ENCODE measurements at regions of chr12 and their contacts with region 1.

Region 1: DNA sequence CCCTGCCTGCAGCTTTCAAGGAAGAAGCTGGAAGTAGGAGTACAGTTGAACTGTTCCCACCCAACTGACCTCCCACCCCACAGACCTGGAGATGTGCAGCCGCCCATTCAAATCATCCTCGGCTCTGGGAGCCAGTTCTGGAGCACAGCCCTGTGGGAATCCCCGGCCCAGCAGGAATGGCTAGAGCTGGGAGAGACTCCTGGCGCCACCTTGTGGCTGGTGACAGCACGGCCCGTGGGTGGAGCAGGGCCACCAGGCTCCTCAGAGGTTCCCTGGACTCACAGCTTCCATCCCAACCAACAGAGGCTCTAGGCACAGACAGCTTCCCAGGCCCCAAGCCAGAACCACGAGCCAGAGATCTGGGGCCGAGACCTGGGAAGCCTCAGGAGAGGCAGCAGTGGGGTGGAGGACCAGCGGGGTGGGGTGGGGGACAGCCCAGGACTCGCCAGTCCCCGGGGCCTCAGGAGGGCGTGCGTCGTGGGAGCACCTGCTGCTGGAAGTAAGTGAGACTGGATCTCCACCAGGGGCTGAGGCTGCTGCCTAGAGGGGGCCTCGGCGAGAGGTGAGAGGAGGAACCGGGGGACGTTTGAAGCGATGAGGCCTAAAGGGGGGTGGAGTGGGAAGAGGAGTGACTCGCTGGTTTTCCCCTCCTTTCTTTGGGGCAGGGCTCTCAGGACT is 43.4 kb downstream of the RNF34 start:
- DNase-seq: no peak
- H3K4me3 ChIP-seq: no peak overlapping the region
- CTCF ChIP-seq: peak; percentile 98

Region 2: GRCh38 chr12:121015825-121016766 is 427.2 kb before region 1 on chr12 and contains the start of gene C12orf43:
- CTCF ChIA-PET with region 1: no interaction called
- POLR2A ChIA-PET with region 1: no interaction called
- DNase-seq: peak; percentile 26
- H3K4me3 ChIP-seq: peak within 1 kb of the TSS; percentile 98
- CTCF ChIP-seq: no peak

Region 3: GRCh38 chr12:121351820-121352681 is 91.3 kb before region 1 on chr12 and contains the start of gene ANAPC5:
- CTCF ChIA-PET with region 1: interaction called, 24 read pairs
- POLR2A ChIA-PET with region 1: no interaction called
- DNase-seq: peak; percentile 96
- H3K4me3 ChIP-seq: peak within 1 kb of the TSS; percentile 98
- CTCF ChIP-seq: no peak

Region 4: GRCh38 chr12:121417847-121418246 is 25.5 kb before region 1 on chr12:
- CTCF ChIA-PET with region 1: interaction called, 75 read pairs
- POLR2A ChIA-PET with region 1: no interaction called
- DNase-seq: no peak
- H3K4me3 ChIP-seq: no peak overlapping the region
- CTCF ChIP-seq: no peak

Region 5: DNA sequence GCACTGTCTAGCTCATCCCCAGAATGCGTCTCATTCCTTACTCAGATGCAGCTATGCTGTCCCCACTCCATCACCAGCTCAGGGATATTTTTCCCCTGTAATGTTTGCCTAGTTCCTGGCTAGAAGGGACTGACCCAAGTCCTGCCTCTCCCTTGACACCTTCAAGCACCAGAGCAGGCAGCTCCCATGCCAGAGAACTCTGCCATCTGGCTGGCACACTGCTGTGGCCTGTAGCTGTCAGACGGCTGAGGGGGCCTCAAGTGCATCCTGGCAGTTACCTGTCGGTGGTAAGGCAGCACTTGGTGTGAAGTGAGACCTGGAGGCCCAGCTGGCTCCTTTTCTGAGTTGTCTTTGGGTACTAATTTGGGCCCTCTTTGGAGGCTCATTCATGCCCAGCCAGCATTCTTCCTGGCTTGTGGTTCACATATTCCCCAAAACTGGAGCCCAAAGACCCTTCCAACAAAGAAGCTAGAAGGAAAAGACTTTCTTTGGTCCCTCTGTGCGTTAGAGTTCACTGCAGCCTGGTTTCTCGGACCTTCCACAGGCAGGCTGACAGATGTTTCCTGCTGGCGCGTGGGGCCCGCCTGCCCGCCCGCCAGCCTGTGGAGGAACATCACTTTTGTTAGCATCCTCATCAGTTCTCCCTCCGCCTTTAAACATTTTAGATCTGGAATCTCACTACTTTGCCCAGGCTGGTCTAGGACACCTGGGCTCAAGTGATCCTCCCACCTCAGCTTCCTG is 10.4 kb before region 1 on chr12:
- CTCF ChIA-PET with region 1: interaction called, 82 read pairs
- POLR2A ChIA-PET with region 1: no interaction called
- DNase-seq: no peak
- H3K4me3 ChIP-seq: no peak overlapping the region
- CTCF ChIP-seq: no peak

Region 6: GRCh38 chr12:121467115-121467793 is 23.9 kb after region 1 on chr12:
- CTCF ChIA-PET with region 1: interaction called, 41 read pairs
- POLR2A ChIA-PET with region 1: no interaction called
- DNase-seq: no peak
- H3K4me3 ChIP-seq: peak overlapping the region; percentile 61
- CTCF ChIP-seq: no peak